ENCODE measurements at regions of chr1 and their contacts with region 1.

Region 1: DNA sequence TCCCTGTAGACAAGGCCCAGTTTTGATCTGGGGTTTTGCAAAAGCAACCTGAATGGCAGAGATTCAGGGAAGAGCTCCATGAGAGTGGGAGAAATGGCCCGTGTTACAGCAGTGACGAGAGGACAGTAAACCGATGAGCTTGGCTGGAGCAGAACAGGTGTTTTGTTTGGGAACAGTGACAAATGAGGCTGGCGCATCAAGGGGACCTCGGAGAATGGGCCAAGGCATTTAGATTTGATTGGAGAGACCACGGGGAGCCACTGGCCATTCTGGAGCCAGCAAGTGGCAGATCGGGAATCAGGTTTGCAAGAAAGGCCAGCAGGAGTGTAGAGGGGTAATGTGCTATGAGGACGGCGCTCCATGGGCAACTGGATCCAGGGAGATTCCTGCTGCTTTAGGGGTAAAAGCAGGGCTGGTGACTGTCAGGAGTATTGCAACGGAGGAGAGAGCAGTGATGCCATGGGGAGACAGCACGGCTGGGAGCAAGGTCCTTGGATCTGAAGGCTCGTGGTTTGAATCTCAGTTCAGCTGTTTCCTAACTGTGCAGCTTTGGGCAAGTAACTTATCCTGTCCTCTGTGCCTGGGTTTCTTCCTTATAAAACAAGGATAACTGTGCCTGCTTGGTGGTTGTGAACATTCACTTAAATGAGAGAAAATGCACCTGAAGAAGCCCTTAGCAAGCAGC is 9.9 kb upstream of the KLHDC7A start:
- DNase-seq: no peak
- H3K4me3 ChIP-seq: no peak overlapping the region
- H3K27ac ChIP-seq: no peak overlapping the region
- H3K4me1 ChIP-seq: no peaks in the 10 kb centered on the region
- H3K27me3 ChIP-seq: no peaks in the 10 kb centered on the region
- CTCF ChIP-seq: no peak

Region 2: GRCh38 chr1:18597160-18598042 is 126.6 kb after region 1 on chr1:
- CTCF ChIA-PET with region 1: no interaction called
- POLR2A ChIA-PET with region 1: no interaction called
- intact Hi-C with region 1: no loop called
- DNase-seq: peak; percentile 70
- H3K4me3 ChIP-seq: no peak overlapping the region
- H3K27ac ChIP-seq: no peak overlapping the region
- H3K4me1 ChIP-seq: peaks cover 10% of the 10 kb centered on the region
- H3K27me3 ChIP-seq: no peaks in the 10 kb centered on the region
- CTCF ChIP-seq: peak; percentile 97

Region 3: GRCh38 chr1:18866314-18866713 is 395.5 kb after region 1 on chr1:
- CTCF ChIA-PET with region 1: interaction called, 10 read pairs
- POLR2A ChIA-PET with region 1: no interaction called
- intact Hi-C with region 1: no loop called
- DNase-seq: no peak
- H3K4me3 ChIP-seq: no peak overlapping the region
- H3K27ac ChIP-seq: no peak overlapping the region
- H3K4me1 ChIP-seq: no peaks in the 10 kb centered on the region
- H3K27me3 ChIP-seq: no peaks in the 10 kb centered on the region
- CTCF ChIP-seq: no peak